ENCODE measurements at regions of chr15 and their contacts with region 1.

Region 1: DNA sequence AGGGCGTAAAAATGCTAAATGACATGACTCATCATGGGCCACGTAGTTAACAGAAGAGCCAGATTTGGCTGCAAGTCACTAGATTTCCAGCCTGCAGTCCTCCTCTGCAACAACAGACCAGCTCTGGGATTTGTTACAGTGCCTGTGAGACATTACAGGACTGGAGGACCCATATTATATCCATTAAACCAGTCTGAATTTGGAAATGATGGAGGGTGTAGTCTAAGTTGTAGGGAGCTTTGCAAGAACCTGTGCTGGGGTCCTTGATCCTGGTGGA is 10.8 kb downstream of the ZNF774 start:
- DNase-seq: peak; percentile 67
- H3K4me3 Mint-ChIP-seq: peak overlapping the region; percentile 57
- H3K27ac Mint-ChIP-seq: peak overlapping the region; percentile 90
- H3K4me1 Mint-ChIP-seq: peaks cover 38% of the 10 kb centered on the region
- H3K27me3 Mint-ChIP-seq: no peaks in the 10 kb centered on the region
- CTCF ChIP-seq: no peak

Region 2: DNA sequence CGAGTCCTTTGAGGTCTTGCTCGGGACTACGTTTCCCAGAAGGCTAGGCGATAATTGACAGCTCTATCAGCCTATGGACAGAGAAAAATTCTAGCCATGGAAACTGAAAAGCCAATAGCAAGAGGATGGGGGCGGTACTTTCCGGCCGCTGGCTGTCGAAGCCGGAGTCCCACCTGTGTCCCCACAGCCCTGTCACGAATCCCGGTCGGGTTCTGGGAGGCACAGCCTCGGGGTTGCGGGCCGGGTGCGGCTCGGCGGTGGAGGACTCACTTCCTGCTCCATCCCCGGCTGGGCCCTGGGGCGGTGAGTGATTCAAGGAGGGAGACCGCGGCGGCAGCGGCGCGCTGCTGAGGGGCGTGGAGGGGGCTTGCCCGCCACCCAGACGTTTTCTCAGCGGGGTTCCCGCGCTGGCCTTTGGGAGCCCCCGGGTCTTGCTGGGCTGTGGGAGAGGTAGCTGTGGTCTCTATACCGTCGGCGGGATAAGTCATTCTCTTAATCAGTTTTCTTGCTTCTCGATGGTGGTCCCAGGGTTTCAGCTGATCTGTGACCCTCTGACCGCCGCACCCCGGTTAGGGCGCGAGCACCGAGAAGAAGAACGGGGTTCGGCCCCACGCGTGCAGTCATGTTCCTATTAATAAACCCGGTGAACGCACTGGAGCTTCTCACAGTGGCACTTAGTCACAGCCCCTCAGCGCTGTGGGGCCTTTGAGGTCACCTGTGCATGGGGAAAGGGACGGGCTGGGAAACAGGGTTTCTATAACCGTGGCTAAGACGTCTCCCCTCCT is 10.6 kb before region 1 on chr15 and contains the start of gene ZNF774:
- CTCF ChIA-PET with region 1: interaction called, 4 read pairs
- POLR2A ChIA-PET with region 1: interaction called, 18 read pairs
- intact Hi-C with region 1: no loop called
- DNase-seq: peak; percentile 96
- H3K4me3 Mint-ChIP-seq: peak within 1 kb of the TSS; percentile 80
- H3K27ac Mint-ChIP-seq: peak within 1 kb of the TSS; percentile 81
- H3K4me1 Mint-ChIP-seq: peaks cover 9% of the 10 kb centered on the region
- H3K27me3 Mint-ChIP-seq: no peaks in the 10 kb centered on the region
- CTCF ChIP-seq: no peak
- total RNA-seq, gene ZNF774: 2.6 and 4.8 TPM in 2 replicates

Region 3: GRCh38 chr15:90382305-90382704 is 19.4 kb after region 1 on chr15:
- CTCF ChIA-PET with region 1: interaction called, 4 read pairs
- POLR2A ChIA-PET with region 1: interaction called, 84 read pairs
- intact Hi-C with region 1: no loop called
- DNase-seq: no peak
- H3K4me3 Mint-ChIP-seq: no peak overlapping the region
- H3K27ac Mint-ChIP-seq: no peak overlapping the region
- H3K4me1 Mint-ChIP-seq: peaks cover 13% of the 10 kb centered on the region
- H3K27me3 Mint-ChIP-seq: no peaks in the 10 kb centered on the region
- CTCF ChIP-seq: no peak

Region 4: GRCh38 chr15:90400406-90401314 is 37.8 kb after region 1 on chr15:
- CTCF ChIA-PET with region 1: interaction called, 9 read pairs
- POLR2A ChIA-PET with region 1: interaction called, 54 read pairs
- intact Hi-C with region 1: loop called (anchors 1 kb)
- DNase-seq: peak; percentile 93
- H3K4me3 Mint-ChIP-seq: peak overlapping the region; percentile 52
- H3K27ac Mint-ChIP-seq: peak overlapping the region; percentile 87
- H3K4me1 Mint-ChIP-seq: peaks cover 30% of the 10 kb centered on the region
- H3K27me3 Mint-ChIP-seq: no peaks in the 10 kb centered on the region
- CTCF ChIP-seq: no peak

Region 5: DNA sequence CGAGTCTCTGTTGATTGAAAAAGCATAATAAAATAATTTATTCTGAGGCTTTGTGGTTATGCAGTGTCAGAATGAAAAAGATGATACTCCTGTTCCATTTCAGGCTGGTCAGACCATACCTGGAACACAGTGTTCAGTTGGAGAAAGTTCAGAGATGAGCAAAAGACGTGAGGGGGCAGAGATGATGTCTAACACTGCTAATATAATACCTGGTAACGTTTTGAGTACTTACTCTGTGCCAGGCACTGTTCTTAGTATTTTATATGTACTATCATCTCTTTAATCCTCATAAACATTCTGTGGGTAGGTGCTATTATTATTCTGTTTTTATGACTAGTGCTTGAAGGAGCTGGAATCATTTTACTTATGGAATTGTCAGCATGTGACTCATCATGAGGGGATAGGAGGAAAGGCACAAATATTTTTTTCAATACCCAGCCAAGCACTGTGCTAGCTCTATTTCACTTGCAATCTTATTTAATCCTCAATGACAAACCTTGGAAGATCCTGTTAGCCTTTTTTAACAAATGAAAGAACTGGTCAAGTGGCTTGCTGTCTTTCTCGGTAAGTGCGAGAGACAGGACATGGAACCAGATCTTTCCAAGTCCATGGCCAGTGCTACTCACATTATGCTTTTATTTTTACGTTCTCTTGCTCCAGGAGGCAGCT is 57.0 kb after region 1 on chr15:
- CTCF ChIA-PET with region 1: interaction called, 6 read pairs
- POLR2A ChIA-PET with region 1: interaction called, 11 read pairs
- intact Hi-C with region 1: loop called (anchors 2 kb)
- DNase-seq: peak; percentile 73
- H3K4me3 Mint-ChIP-seq: peak overlapping the region; percentile 64
- H3K27ac Mint-ChIP-seq: peak overlapping the region; percentile 96
- H3K4me1 Mint-ChIP-seq: peaks cover 26% of the 10 kb centered on the region
- H3K27me3 Mint-ChIP-seq: no peaks in the 10 kb centered on the region
- CTCF ChIP-seq: no peak

Region 6: GRCh38 chr15:90482124-90483011 is 119.5 kb after region 1 on chr15:
- CTCF ChIA-PET with region 1: interaction called, 83 read pairs
- POLR2A ChIA-PET with region 1: interaction called, 3 read pairs
- intact Hi-C with region 1: loop called (anchors 1 kb)
- DNase-seq: peak; percentile 51
- H3K4me3 Mint-ChIP-seq: no peak overlapping the region
- H3K27ac Mint-ChIP-seq: no peak overlapping the region
- H3K4me1 Mint-ChIP-seq: peaks cover 18% of the 10 kb centered on the region
- H3K27me3 Mint-ChIP-seq: no peaks in the 10 kb centered on the region
- CTCF ChIP-seq: peak; percentile 56

Region 7: DNA sequence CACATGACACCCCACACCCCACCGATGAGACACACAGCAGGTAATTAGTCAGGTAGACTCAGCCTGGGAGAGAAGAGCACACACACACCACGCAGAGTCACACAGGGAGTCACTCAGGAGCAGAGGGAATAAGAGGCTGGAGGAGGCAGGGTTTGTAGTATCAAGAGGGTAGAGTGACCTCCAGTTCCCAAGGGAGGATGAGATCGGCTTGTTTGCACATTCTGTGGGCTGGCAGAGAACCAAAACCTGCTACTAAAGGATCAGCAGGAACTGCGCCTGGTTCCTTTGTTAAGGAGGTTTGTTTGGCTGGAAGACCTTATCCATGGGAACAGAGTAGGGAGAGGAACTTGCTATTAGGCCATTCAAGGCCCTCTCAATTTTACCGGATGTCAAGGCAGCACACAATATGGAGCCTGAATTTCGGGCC is 1209.3 kb after region 1 on chr15:
- CTCF ChIA-PET with region 1: no interaction called
- POLR2A ChIA-PET with region 1: no interaction called
- intact Hi-C with region 1: no loop called
- DNase-seq: peak; percentile 37
- H3K4me3 Mint-ChIP-seq: no peak overlapping the region
- H3K27ac Mint-ChIP-seq: no peak overlapping the region
- H3K4me1 Mint-ChIP-seq: no peaks in the 10 kb centered on the region
- H3K27me3 Mint-ChIP-seq: peaks cover 17% of the 10 kb centered on the region
- CTCF ChIP-seq: no peak